Endothelial cell of umbilical vein (primary cell): ENCODE measurements at regions of chr7 and their contacts with region 1.

Region 1: GRCh38 chr7:97104719-97105238 is 12.7 kb upstream of the SDHAF3 start:
- DNase-seq: peak; percentile 79
- H3K4me3 ChIP-seq: no peak overlapping the region
- H3K27ac ChIP-seq: no peak overlapping the region
- H3K4me1 ChIP-seq: no peaks in the 10 kb centered on the region
- H3K27me3 ChIP-seq: peaks cover 0 to 3% of the 10 kb centered on the region in 2 experiments
- CTCF ChIP-seq: peak; percentile 69 to 78
- POLR2A ChIP-seq: no peak

Region 2: DNA sequence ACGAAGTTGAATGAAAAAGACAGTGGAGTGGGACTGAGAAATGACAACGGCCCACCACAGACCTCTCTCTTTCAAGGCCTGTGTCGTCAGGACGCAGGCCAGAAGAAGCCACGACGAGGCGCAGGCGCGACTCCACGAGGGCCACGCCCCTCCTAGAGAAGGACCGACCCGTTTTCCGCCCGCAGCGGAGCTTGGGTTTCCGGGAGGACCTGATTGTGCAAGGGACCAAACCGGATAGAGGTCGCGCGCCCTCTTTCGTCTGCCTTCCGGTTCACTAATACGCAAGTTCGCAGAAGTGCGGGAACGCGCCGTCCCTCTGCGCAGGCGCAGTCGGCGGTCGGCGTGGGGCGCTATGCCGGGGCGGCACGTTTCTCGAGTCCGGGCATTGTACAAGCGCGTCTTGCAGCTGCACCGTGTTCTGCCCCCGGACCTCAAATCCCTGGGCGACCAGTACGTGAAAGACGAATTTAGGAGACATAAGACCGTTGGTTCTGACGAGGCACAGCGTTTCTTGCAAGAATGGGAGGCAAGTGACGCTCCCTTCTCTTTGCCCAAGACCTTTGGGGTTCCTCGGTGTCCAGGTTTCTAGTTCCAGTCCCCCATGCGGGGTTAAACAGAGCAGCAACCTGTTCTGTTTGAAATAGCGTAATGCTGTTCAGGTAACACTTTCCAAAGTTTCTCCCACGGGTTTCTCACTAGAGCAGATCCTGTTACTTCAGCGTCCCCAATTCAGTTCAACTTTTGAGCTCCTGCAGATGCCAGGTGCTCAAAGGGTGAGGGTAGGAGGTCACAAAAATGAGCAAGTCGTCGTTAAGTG is 12.8 kb after region 1 on chr7 and contains the start of gene SDHAF3:
- CTCF ChIA-PET with region 1: interaction called, 22 read pairs
- POLR2A ChIA-PET with region 1: no interaction called
- dilution Hi-C with region 1: no loop called
- intact Hi-C with region 1: no loop called
- DNase-seq: peak; percentile 93
- H3K4me3 ChIP-seq: peak within 1 kb of the TSS; percentile 71 to 93 (median 90)
- H3K27ac ChIP-seq: peak within 1 kb of the TSS; percentile 15
- H3K4me1 ChIP-seq: peaks cover 10% of the 10 kb centered on the region
- H3K27me3 ChIP-seq: no peaks in the 10 kb centered on the region
- CTCF ChIP-seq: no peak
- POLR2A ChIP-seq: peak; percentile 88
- total RNA-seq, gene SDHAF3: 5.2 and 7.1 TPM in 2 replicates

Region 3: DNA sequence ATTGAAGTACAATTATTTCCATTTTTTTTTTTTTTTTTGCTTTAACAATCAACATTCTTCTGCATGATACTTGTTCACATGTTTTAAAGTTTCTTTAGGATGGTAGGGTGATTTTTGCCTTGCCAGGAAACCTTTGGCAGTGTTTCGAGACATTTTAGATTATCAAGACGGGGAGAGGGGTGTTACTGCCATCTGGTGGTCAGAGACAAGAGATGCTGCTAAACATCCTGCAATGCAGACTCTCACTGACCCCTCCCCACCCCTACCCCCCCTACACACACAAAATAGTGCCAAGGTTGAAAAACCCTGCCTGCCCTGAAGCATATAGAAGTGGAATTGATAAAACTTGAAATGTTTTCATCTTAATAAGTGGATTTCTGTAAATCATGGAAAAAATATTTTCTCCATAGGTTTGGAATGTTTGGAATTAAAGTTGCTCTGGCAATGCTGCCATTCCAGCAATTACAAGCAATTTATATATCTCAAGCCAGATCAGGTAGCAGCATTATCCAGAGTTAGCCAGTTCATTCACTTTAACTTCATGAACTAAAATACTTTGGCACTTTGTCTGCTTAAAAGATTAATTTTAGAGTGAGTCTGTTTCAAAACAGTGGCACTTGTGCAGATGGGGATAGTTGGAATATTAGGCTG is 74.8 kb after region 1 on chr7:
- CTCF ChIA-PET with region 1: interaction called, 30 read pairs
- POLR2A ChIA-PET with region 1: no interaction called
- dilution Hi-C with region 1: no loop called
- intact Hi-C with region 1: loop called (anchors 1 kb)
- DNase-seq: peak; percentile 56
- H3K4me3 ChIP-seq: no peak overlapping the region
- H3K27ac ChIP-seq: no peak overlapping the region
- H3K4me1 ChIP-seq: peaks cover 2% of the 10 kb centered on the region
- H3K27me3 ChIP-seq: no peaks in the 10 kb centered on the region
- CTCF ChIP-seq: peak; percentile 57 to 82
- POLR2A ChIP-seq: no peak

Region 4: GRCh38 chr7:97835296-97836138 is 730.7 kb after region 1 on chr7:
- CTCF ChIA-PET with region 1: interaction called, 52 read pairs
- POLR2A ChIA-PET with region 1: no interaction called
- dilution Hi-C with region 1: no loop called
- intact Hi-C with region 1: loop called (anchors 1 kb)
- DNase-seq: peak; percentile 66
- H3K4me3 ChIP-seq: no peak overlapping the region
- H3K27ac ChIP-seq: no peak overlapping the region
- H3K4me1 ChIP-seq: no peaks in the 10 kb centered on the region
- H3K27me3 ChIP-seq: peaks cover 1 to 8% of the 10 kb centered on the region in 2 experiments
- CTCF ChIP-seq: peak; percentile 53 to 58
- POLR2A ChIP-seq: no peak

Region 5: GRCh38 chr7:98014352-98014751 is 909.6 kb after region 1 on chr7:
- CTCF ChIA-PET with region 1: interaction called, 27 read pairs
- POLR2A ChIA-PET with region 1: interaction called, 5 read pairs
- dilution Hi-C with region 1: no loop called
- intact Hi-C with region 1: loop called (anchors 10 kb)
- DNase-seq: no peak
- H3K4me3 ChIP-seq: no peak overlapping the region
- H3K27ac ChIP-seq: no peak overlapping the region
- H3K4me1 ChIP-seq: no peaks in the 10 kb centered on the region
- H3K27me3 ChIP-seq: no peaks in the 10 kb centered on the region
- CTCF ChIP-seq: no peak
- POLR2A ChIP-seq: no peak